Heart left ventricle (tissue), 16 donors: ENCODE measurements at regions of chr16 and their contacts with region 1.

Region 1: GRCh38 chr16:22424161-22424937 is 49.9 kb upstream of the CDR2 start:
- DNase-seq: peak in 2 of 5 donors; percentile 35 to 45
- ATAC-seq: peak in 3 of 4 donors; percentile 23 to 41 (median 32)
- H3K4me3 ChIP-seq: peak overlapping the region in 8 of 12 donors; percentile 10 to 44 (median 29)
- H3K27ac ChIP-seq: peak overlapping the region; percentile 47 to 80 (median 67)
- H3K4me1 ChIP-seq: peaks cover 0 to 18% (median 2%) of the 10 kb centered on the region in 12 donors
- H3K27me3 ChIP-seq: no peaks in the 10 kb centered on the region
- CTCF ChIP-seq: no peak
- POLR2A ChIP-seq: no peak

Region 2: GRCh38 chr16:22321339-22322001 is 102.9 kb before region 1 on chr16:
- intact Hi-C with region 1: no loop called
- DNase-seq: peak in 3 of 5 donors; percentile 47 to 68 (median 59)
- ATAC-seq: peak; percentile 25 to 74 (median 52)
- H3K4me3 ChIP-seq: no peak overlapping the region
- H3K27ac ChIP-seq: no peak overlapping the region
- H3K4me1 ChIP-seq: peaks cover 0 to 8% (median 1%) of the 10 kb centered on the region in 12 donors
- H3K27me3 ChIP-seq: no peaks in the 10 kb centered on the region
- CTCF ChIP-seq: peak; percentile 85 to 97 (median 88)
- POLR2A ChIP-seq: no peak

Region 3: GRCh38 chr16:22346483-22346882 is 77.9 kb before region 1 on chr16:
- intact Hi-C with region 1: no loop called
- DNase-seq: no peak
- ATAC-seq: peak; percentile 21 to 63 (median 52)
- H3K4me3 ChIP-seq: no peak overlapping the region
- H3K27ac ChIP-seq: peak overlapping the region in 5 of 12 donors; percentile 5 to 66 (median 20)
- H3K4me1 ChIP-seq: peaks cover 0 to 16% (median 4%) of the 10 kb centered on the region in 12 donors
- H3K27me3 ChIP-seq: no peaks in the 10 kb centered on the region
- CTCF ChIP-seq: no peak
- POLR2A ChIP-seq: no peak

Region 4: DNA sequence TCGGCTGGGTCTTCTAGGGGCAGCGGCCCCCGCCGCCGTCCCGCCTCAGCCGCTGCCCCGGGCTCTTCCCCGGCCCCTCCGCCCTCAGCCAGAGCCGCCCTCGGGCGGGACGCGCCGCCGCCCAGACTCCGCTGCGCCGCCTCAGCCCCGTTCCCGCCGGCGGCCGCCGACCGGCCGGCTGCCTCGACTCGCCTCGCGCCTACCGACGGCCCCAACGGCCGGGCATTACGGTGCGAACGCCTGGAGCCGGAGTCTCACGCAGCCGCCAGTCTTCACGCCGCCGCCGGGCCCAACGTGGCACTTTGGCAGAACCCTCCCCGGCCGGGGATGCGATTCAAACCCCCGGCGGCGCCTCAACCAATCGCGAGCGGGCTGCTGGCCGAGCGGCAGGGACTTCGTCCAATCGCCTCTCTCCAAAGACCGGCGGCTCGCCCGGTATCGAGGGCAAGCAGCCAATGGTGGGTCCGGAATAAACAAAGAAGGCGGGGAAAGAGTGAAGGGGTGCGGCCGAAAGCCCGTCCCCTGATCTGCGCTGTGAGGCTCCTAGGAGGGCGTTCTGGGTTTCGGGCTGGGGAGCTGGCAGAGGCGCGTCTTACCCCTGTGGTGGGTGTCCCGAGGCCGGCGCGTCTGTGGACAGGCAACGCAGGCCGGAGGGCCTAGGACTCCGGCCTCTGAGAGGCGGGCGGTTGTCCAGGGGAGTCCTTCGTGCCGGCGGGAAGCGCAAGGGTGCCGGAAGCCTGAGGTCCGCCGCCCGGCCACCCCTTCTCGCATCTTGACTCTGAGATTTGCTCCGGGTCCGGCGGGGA is 49.8 kb before region 1 on chr16 and contains the start of gene CDR2:
- intact Hi-C with region 1: loop called in 5 of 10 experiments (anchors 10 kb)
- DNase-seq: peak; percentile 99
- ATAC-seq: peak; percentile 97 to 98 (median 98)
- H3K4me3 ChIP-seq: peak within 1 kb of the TSS; percentile 64 to 99 (median 90)
- H3K27ac ChIP-seq: peak within 1 kb of the TSS; percentile 56 to 91 (median 80)
- H3K4me1 ChIP-seq: peaks cover 0 to 50% (median 23%) of the 10 kb centered on the region in 12 donors
- H3K27me3 ChIP-seq: no peaks in the 10 kb centered on the region
- CTCF ChIP-seq: no peak
- POLR2A ChIP-seq: peak; percentile 72 to 93
- total RNA-seq, gene CDR2: 4.7 to 12.4 (median 6.0) TPM